Endothelial cell of umbilical vein (primary cell): ENCODE measurements at regions of chr1 and their contacts with region 1.

Region 1: DNA sequence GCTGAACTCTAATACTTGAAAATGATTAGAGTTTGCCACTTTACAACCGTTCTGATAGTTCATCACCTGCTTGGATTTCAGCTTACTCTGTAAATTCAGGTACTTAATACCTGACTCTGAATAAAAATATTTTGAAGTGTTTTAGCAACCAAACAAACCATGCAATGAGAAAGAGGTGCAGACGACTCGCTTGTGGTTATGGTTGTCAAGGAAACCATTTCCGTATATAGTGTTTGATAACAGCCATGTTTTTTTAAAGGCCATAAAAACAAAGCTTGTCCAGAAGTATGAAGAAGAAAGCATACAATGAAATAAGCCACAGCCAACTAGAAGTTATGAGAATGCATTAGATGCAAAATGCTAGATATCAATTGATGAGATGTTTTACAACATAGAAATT is 167.2 kb upstream of the HMCN1 start:
- DNase-seq: peak; percentile 87
- H3K4me3 ChIP-seq: no peak overlapping the region
- H3K27ac ChIP-seq: peak overlapping the region; percentile 38
- H3K4me1 ChIP-seq: peaks cover 13% of the 10 kb centered on the region
- H3K27me3 ChIP-seq: no peaks in the 10 kb centered on the region
- CTCF ChIP-seq: no peak
- POLR2A ChIP-seq: no peak

Region 2: DNA sequence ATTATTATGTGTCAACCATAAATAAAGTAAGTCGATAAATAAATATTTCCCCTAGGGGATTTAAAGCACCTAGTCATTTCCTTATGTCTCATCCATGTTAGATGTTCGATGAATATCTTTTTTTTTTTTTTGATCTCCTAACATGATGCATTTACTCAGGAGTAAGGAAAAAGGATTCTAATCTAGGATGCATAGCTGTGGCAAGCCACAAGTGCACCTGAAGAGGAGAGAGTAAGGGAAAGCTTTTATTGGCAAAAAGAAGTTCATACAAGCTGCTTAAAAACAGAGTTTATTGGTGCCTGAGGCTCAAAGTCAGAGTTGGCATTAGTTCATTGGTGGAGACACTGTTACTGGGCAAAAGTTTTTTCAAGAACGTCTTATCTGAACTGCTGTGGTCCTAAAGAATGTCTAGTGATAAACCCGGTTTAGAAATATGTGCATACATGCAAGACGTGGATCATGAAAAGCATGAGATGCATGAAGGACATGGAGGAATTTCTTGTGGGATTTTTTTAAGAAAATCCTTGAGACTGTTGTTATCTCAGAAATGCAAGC is 358.3 kb before region 1 on chr1:
- CTCF ChIA-PET with region 1: no interaction called
- POLR2A ChIA-PET with region 1: no interaction called
- dilution Hi-C with region 1: no loop called
- intact Hi-C with region 1: no loop called
- DNase-seq: no peak
- H3K4me3 ChIP-seq: no peak overlapping the region
- H3K27ac ChIP-seq: no peak overlapping the region
- H3K4me1 ChIP-seq: peaks cover 2% of the 10 kb centered on the region
- H3K27me3 ChIP-seq: no peaks in the 10 kb centered on the region
- CTCF ChIP-seq: no peak
- POLR2A ChIP-seq: no peak

Region 3: DNA sequence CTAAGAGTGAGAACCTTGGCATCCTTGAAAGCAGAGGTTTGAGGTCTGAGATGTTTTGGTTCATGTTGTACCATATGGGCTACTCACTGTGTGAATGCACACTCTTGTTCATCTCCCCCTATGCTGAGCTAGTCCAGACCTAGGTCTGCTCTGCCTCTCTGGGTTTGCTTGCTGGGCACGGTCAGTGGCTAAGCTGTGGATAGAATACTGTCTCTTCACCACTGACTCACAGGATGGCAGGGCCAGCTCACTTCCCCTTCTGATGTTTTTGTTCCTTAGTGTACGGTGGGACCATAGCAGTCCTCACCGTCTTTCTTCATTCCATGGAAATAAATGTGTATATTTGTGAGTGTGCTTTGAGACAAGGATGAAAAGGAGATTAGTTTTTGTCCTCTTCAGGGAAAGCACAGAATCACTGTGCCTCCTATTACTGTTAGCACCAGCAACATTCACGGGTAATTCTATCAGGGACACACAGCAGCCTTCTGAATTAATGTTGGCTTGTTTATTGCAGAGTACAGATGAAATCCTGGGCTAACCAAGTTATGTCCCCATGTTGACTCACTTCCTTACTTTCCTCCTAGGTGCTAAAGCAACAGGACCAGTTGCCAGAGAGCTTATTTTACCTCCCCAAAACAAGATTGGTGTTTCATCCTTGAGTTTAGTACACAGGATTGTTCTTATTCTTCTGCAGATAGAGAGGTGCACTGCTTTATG is 193.0 kb before region 1 on chr1:
- CTCF ChIA-PET with region 1: no interaction called
- POLR2A ChIA-PET with region 1: no interaction called
- dilution Hi-C with region 1: no loop called
- intact Hi-C with region 1: loop called (anchors 1 kb)
- DNase-seq: peak; percentile 93
- H3K4me3 ChIP-seq: peak overlapping the region in 1 of 3 experiments; percentile 55
- H3K27ac ChIP-seq: peak overlapping the region; percentile 97
- H3K4me1 ChIP-seq: peaks cover 48% of the 10 kb centered on the region
- H3K27me3 ChIP-seq: no peaks in the 10 kb centered on the region
- CTCF ChIP-seq: no peak
- POLR2A ChIP-seq: no peak

Region 4: GRCh38 chr1:185426848-185427247 is 140.1 kb before region 1 on chr1:
- CTCF ChIA-PET with region 1: no interaction called
- POLR2A ChIA-PET with region 1: no interaction called
- dilution Hi-C with region 1: no loop called
- intact Hi-C with region 1: loop called (anchors 5 kb)
- DNase-seq: peak; percentile 92
- H3K4me3 ChIP-seq: no peak overlapping the region
- H3K27ac ChIP-seq: peak overlapping the region; percentile 87
- H3K4me1 ChIP-seq: peaks cover 18% of the 10 kb centered on the region
- H3K27me3 ChIP-seq: no peaks in the 10 kb centered on the region
- CTCF ChIP-seq: no peak
- POLR2A ChIP-seq: no peak

Region 5: GRCh38 chr1:185520188-185520935 is 46.6 kb before region 1 on chr1:
- CTCF ChIA-PET with region 1: no interaction called
- POLR2A ChIA-PET with region 1: no interaction called
- dilution Hi-C with region 1: no loop called
- intact Hi-C with region 1: loop called (anchors 2 kb)
- DNase-seq: peak; percentile 57
- H3K4me3 ChIP-seq: no peak overlapping the region
- H3K27ac ChIP-seq: peak overlapping the region; percentile 35
- H3K4me1 ChIP-seq: peaks cover 8% of the 10 kb centered on the region
- H3K27me3 ChIP-seq: no peaks in the 10 kb centered on the region
- CTCF ChIP-seq: no peak
- POLR2A ChIP-seq: no peak

Region 6: DNA sequence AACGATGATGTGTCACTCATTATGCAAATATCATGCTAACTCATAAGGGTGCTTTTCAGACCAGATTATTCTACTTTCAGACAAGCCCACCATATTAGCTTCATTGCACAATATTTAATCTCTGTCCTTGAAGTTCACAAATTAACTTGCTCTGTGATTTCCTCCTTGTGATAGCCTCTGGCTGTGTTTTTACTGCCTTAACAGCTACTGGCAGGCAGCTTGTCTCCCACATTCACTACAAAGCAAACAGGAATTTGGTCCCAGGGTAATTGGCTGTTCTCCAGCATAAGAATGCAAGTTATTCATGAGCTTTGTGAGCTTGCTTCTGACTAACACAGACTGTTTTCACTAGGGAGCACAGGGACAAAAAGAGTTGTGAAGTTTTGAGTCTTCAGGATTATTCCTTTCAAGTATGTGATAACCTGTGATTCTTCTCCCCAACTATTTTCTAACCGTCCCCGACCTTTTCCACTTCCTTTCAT is 79.2 kb after region 1 on chr1:
- CTCF ChIA-PET with region 1: interaction called, 5 read pairs
- POLR2A ChIA-PET with region 1: no interaction called
- dilution Hi-C with region 1: no loop called
- intact Hi-C with region 1: loop called (anchors 1 kb)
- DNase-seq: peak; percentile 99
- H3K4me3 ChIP-seq: peak overlapping the region in 1 of 3 experiments; percentile 27
- H3K27ac ChIP-seq: peak overlapping the region; percentile 72
- H3K4me1 ChIP-seq: peaks cover 23% of the 10 kb centered on the region
- H3K27me3 ChIP-seq: no peaks in the 10 kb centered on the region
- CTCF ChIP-seq: no peak
- POLR2A ChIP-seq: no peak

Region 7: DNA sequence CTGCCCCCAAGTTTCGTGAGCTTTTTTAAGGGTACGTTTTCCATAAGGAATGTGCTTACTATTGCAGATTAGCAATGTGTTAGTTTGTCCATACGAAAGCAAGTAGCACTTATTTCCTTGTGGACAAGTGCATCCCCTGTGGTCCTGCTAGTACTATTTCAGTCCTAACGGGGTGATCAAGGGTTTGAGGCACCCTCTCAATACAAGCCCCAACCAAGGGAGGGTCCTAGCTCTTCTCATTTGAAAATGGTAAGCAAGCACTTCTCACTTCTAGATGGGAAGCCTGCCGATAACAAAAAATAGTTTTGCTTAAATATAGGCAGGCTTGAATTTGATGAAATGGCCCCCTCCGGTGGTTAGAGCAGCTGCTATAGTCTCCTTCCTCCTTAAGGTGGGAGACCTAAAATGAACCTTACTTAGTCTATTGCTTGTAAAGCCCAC is 103.2 kb after region 1 on chr1:
- CTCF ChIA-PET with region 1: interaction called, 4 read pairs
- POLR2A ChIA-PET with region 1: no interaction called
- dilution Hi-C with region 1: no loop called
- intact Hi-C with region 1: loop called (anchors 5 kb)
- DNase-seq: peak; percentile 74
- H3K4me3 ChIP-seq: no peak overlapping the region
- H3K27ac ChIP-seq: no peak overlapping the region
- H3K4me1 ChIP-seq: peaks cover 17% of the 10 kb centered on the region
- H3K27me3 ChIP-seq: no peaks in the 10 kb centered on the region
- CTCF ChIP-seq: peak; percentile 44 to 57
- POLR2A ChIP-seq: no peak